GM12878 (cell line): ENCODE measurements at regions of chr6 and their contacts with region 1.

Region 1: DNA sequence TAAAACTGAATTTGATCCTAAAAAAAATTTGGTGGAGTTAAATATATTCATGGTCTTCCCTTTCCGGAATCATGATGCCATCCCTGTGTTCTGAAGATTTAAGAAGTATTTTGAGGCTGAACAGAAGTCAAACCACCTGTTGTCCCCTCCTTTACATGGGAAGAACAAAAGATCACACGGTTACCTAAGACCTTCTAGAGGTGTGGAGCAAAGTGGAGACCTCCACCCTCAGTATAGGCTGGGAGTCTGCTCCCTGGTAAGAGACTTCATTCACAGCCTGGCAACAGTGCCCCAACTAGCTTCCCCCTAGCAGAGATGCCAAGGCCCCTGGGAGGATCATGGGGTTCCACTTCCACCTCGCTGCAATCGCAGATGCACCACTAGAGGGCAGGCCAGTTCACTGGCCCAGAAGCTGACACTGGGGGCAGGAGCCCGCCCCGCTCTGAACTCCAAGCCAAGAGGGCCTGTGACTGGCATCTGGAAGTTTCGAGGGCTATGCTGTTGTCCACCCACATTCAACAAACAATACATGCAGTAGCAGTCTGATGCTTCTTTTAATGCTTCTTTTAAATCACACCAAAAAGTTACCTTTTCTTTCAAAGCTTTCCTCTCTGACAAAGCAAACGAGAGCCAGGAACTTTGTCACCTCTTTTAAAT is 19.5 kb upstream of the UBE2J1 start:
- DNase-seq: no peak
- ATAC-seq: peak; percentile 89
- H3K4me3 ChIP-seq: no peak overlapping the region
- H3K27ac ChIP-seq: peak overlapping the region; percentile 52
- H3K4me1 ChIP-seq: peaks cover 28% of the 10 kb centered on the region
- H3K27me3 ChIP-seq: no peaks in the 10 kb centered on the region
- CTCF ChIP-seq: peak; percentile 97 to 99 (median 99)
- EP300 ChIP-seq: no peak
- POLR2A ChIP-seq: no peak
- RAD21 ChIP-seq: peak; percentile 85

Region 2: DNA sequence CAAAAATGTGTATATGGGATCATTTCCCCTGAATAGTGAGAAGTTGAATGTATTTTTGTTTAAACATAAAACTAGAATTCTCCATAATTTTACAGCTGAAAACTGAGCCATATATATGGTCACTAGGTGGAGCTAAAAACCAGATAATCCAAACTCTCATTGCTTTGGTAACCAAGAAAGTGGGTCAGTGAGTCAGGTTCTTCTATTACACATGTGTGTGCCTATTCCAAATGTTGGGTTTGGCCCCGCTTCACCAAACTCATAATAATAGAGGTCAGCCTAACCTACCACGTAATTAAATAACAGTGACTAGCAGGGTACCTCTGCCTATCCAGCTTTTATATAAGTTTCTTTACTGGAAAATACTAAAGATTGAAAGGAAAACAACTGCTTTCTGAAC is 389.3 kb before region 1 on chr6:
- CTCF ChIA-PET with region 1: interaction called, 55 read pairs
- POLR2A ChIA-PET with region 1: no interaction called
- RAD21 ChIA-PET with region 1: interaction called, 13 read pairs
- SMC1A ChIA-PET with region 1: interaction called, 24 read pairs
- in situ Hi-C with region 1: no loop called
- intact Hi-C with region 1: loop called (anchors 2 kb)
- DNase-seq: peak; percentile 19
- ATAC-seq: peak; percentile 94
- H3K4me3 ChIP-seq: no peak overlapping the region
- H3K27ac ChIP-seq: no peak overlapping the region
- H3K4me1 ChIP-seq: no peaks in the 10 kb centered on the region; the same call in 1 of the 2 replicates
- H3K27me3 ChIP-seq: no peaks in the 10 kb centered on the region
- CTCF ChIP-seq: peak; percentile 51 to 83 (median 72); a peak in 5 of 6 replicates
- EP300 ChIP-seq: no peak
- POLR2A ChIP-seq: no peak
- RAD21 ChIP-seq: peak; percentile 89

Region 3: GRCh38 chr6:89145787-89146646 is 226.0 kb before region 1 on chr6 and contains the start of gene PM20D2:
- CTCF ChIA-PET with region 1: interaction called, 14 read pairs
- POLR2A ChIA-PET with region 1: no interaction called
- RAD21 ChIA-PET with region 1: interaction called, 3 read pairs
- SMC1A ChIA-PET with region 1: interaction called, 6 read pairs
- in situ Hi-C with region 1: no loop called
- intact Hi-C with region 1: no loop called
- DNase-seq: no peak
- ATAC-seq: peak; percentile 84
- H3K4me3 ChIP-seq: peak within 1 kb of the TSS; percentile 71
- H3K27ac ChIP-seq: peak within 1 kb of the TSS; percentile 75
- H3K4me1 ChIP-seq: peaks cover 16% of the 10 kb centered on the region
- H3K27me3 ChIP-seq: no peaks in the 10 kb centered on the region
- CTCF ChIP-seq: no peak
- EP300 ChIP-seq: no peak
- POLR2A ChIP-seq: peak; percentile 86
- RAD21 ChIP-seq: no peak
- polyA plus RNA-seq, gene PM20D2: 7.8 to 8.3 TPM

Region 4: GRCh38 chr6:89339565-89339964 is 32.4 kb before region 1 on chr6:
- CTCF ChIA-PET with region 1: interaction called, 260 read pairs
- POLR2A ChIA-PET with region 1: no interaction called
- RAD21 ChIA-PET with region 1: interaction called, 7 read pairs
- SMC1A ChIA-PET with region 1: interaction called, 10 read pairs
- in situ Hi-C with region 1: no loop called
- intact Hi-C with region 1: no loop called
- DNase-seq: no peak
- ATAC-seq: no peak
- H3K4me3 ChIP-seq: no peak overlapping the region
- H3K27ac ChIP-seq: no peak overlapping the region
- H3K4me1 ChIP-seq: peaks cover 3% of the 10 kb centered on the region
- H3K27me3 ChIP-seq: no peaks in the 10 kb centered on the region
- CTCF ChIP-seq: no peak
- EP300 ChIP-seq: no peak
- POLR2A ChIP-seq: no peak
- RAD21 ChIP-seq: no peak

Region 5: DNA sequence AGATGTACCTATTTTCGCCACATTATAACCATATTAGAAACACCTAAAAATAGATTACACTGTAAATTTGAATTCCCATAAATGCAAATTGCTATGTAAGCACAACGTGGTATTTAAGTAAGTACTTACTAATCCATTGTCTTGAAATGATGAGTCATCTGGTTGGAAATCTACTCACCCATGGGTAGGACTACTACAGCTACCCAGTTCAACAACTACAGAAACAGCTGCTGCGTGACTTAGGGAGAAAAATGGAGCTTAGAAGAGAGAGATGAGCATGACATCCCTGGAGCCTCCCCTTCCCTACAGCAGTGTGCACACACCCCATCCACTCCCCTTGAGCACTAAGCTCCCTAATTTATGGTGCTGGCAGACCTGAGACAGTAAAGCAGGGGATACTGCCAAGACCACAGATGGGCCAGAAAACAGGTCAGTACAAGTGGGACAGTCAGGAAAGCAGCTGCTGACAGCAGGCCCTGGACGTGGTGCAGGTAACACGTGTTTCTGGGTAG is 13.2 kb after region 1 on chr6:
- CTCF ChIA-PET with region 1: interaction called, 56 read pairs
- POLR2A ChIA-PET with region 1: interaction called, 4 read pairs
- RAD21 ChIA-PET with region 1: interaction called, 10 read pairs
- SMC1A ChIA-PET with region 1: interaction called, 8 read pairs
- in situ Hi-C with region 1: no loop called
- intact Hi-C with region 1: loop called (anchors 1 kb)
- DNase-seq: peak; percentile 51
- ATAC-seq: peak; percentile 53
- H3K4me3 ChIP-seq: no peak overlapping the region
- H3K27ac ChIP-seq: no peak overlapping the region
- H3K4me1 ChIP-seq: peaks cover 20% of the 10 kb centered on the region
- H3K27me3 ChIP-seq: no peaks in the 10 kb centered on the region
- CTCF ChIP-seq: no peak
- EP300 ChIP-seq: no peak
- POLR2A ChIP-seq: no peak
- RAD21 ChIP-seq: no peak

Region 6: DNA sequence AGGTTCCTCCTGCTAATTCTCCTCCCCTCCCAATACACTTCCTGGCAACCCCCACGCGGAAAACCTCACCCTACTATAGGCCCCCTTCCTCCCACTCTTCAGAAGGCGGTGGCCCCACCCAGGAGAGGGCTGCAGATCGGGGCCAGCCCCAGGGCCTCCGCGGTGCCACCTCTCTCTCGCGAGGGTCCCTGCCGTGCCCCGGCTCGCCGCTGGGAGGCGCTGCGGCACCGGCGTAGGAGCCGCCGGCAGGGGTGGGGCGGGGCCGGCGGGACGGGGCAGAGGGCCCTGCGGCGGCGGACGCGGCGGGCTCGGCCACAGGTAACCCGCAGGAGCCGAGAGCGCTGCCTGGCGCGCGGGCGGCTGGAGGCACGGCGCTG is 60.9 kb after region 1 on chr6 and contains the start of gene ANKRD6:
- CTCF ChIA-PET with region 1: interaction called, 57 read pairs
- POLR2A ChIA-PET with region 1: no interaction called
- RAD21 ChIA-PET with region 1: interaction called, 18 read pairs
- SMC1A ChIA-PET with region 1: interaction called, 27 read pairs
- in situ Hi-C with region 1: no loop called
- intact Hi-C with region 1: loop called (anchors 2 kb)
- DNase-seq: peak; percentile 17
- ATAC-seq: peak; percentile 97
- H3K4me3 ChIP-seq: peak within 1 kb of the TSS; percentile 79
- H3K27ac ChIP-seq: no peak within 1 kb of the TSS
- H3K4me1 ChIP-seq: peaks cover 8% of the 10 kb centered on the region
- H3K27me3 ChIP-seq: peaks cover 0 to 4% of the 10 kb centered on the region in 2 experiments; a peak in 3 of 4 replicates
- CTCF ChIP-seq: peak; percentile 81 to 92 (median 84); a peak in 5 of 6 replicates
- EP300 ChIP-seq: no peak
- POLR2A ChIP-seq: no peak
- RAD21 ChIP-seq: peak; percentile 93
- polyA plus RNA-seq, gene ANKRD6: 0.03 to 0.09 TPM

Region 7: DNA sequence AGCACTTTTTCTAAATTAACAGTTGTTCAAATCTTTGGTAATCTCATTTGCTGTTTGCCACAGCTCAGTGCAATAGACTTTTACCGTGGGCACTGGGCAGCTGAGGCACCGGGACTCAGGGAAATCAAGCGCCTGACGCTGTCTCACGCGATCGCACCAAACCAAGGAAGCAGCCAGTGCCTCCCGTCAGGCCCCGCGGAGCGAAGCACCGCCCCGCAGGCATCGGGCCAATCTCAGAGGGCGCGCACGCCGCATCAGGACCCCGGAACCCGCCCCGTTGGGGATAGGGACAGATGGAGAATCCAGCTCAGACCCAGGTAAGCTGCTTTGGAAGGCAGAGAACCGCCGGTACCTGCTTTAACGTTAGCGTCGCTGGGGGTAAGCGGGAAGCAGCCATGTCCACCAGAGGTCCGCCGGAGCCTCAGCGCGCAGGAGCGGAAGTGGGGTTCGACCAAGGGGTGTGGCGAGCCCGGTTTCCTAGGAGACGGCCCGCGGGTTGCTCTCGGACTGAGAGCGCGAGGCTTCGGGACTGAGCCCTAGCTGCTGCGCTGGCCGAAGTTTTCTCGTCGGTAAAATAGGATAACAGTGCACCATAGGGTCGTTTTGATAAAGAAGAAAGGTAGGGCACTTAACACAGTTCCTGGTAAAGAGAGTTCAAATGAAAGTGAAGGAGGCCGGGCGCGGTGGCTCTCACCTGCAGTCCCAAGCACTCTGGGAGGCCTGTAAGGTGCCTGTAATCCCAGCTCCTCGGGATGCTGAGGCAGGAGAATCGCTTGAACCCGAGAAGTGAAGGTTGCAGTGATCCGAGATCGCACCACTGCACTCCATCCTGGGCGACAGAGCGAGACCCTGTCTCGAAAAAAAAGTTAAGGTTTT is 266.6 kb after region 1 on chr6 and contains the start of gene LYRM2:
- CTCF ChIA-PET with region 1: interaction called, 20 read pairs
- POLR2A ChIA-PET with region 1: no interaction called
- RAD21 ChIA-PET with region 1: interaction called, 11 read pairs
- SMC1A ChIA-PET with region 1: interaction called, 9 read pairs
- in situ Hi-C with region 1: no loop called
- intact Hi-C with region 1: no loop called
- DNase-seq: peak; percentile 71
- ATAC-seq: peak; percentile 99
- H3K4me3 ChIP-seq: peak within 1 kb of the TSS; percentile 87
- H3K27ac ChIP-seq: peak within 1 kb of the TSS; percentile 99
- H3K4me1 ChIP-seq: peaks cover 7% of the 10 kb centered on the region
- H3K27me3 ChIP-seq: no peaks in the 10 kb centered on the region
- CTCF ChIP-seq: no peak
- EP300 ChIP-seq: no peak
- POLR2A ChIP-seq: peak; percentile 96
- RAD21 ChIP-seq: no peak
- polyA plus RNA-seq, gene LYRM2: 57.1 to 75.0 TPM

Region 8: GRCh38 chr6:89873721-89874120 is 501.7 kb after region 1 on chr6:
- CTCF ChIA-PET with region 1: no interaction called
- POLR2A ChIA-PET with region 1: no interaction called
- RAD21 ChIA-PET with region 1: no interaction called
- SMC1A ChIA-PET with region 1: no interaction called
- in situ Hi-C with region 1: no loop called
- intact Hi-C with region 1: no loop called
- DNase-seq: no peak
- ATAC-seq: no peak
- H3K4me3 ChIP-seq: no peak overlapping the region
- H3K27ac ChIP-seq: no peak overlapping the region
- H3K4me1 ChIP-seq: no peaks in the 10 kb centered on the region
- H3K27me3 ChIP-seq: no peaks in the 10 kb centered on the region
- CTCF ChIP-seq: no peak
- EP300 ChIP-seq: no peak
- POLR2A ChIP-seq: no peak
- RAD21 ChIP-seq: no peak